Upper lobe of right lung (tissue), 1 donor: ENCODE measurements at regions of chr21 and their contacts with region 1.

Region 1: DNA sequence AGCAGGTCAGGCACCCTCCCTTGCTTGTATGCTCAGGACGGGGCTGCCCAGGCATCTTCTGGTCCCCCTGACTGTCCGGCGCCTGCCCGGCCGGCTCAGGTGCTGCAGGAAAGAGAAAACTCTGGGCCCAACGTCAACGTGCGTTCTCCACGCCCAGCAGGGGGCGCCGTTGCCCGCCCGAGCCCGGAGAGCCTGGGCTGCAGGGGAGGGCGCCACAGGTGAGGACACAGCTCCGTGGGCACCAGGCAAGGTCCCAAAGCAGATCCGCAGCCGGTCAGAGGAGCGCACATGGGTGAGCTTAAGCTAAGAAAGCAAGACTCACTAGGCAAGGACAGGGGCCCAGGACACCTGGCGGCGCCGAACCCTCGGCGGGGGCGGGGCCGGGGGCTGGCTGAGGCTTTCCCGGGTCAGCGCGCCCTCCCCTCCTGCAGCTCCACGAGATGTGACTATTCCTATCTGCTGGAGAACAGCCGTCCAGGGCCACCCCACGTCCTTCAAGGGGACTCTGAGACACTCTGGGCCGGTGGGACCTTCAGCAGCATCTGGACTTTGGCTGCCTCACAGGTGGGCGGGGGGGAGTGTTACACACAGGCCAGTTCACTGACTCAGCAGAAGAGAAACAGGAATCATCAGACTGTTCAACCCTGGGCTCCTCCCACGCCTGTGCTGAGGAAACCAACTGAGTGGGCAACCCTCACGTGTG is 29.3 kb downstream of the KRTAP10-1 start:
- DNase-seq: peak; percentile 87
- ATAC-seq: peak; percentile 76
- H3K4me3 ChIP-seq: no peak overlapping the region
- H3K27ac ChIP-seq: no peak overlapping the region
- H3K4me1 ChIP-seq: no peaks in the 10 kb centered on the region
- H3K27me3 ChIP-seq: peaks cover 18% of the 10 kb centered on the region
- CTCF ChIP-seq: peak; percentile 74

Region 2: DNA sequence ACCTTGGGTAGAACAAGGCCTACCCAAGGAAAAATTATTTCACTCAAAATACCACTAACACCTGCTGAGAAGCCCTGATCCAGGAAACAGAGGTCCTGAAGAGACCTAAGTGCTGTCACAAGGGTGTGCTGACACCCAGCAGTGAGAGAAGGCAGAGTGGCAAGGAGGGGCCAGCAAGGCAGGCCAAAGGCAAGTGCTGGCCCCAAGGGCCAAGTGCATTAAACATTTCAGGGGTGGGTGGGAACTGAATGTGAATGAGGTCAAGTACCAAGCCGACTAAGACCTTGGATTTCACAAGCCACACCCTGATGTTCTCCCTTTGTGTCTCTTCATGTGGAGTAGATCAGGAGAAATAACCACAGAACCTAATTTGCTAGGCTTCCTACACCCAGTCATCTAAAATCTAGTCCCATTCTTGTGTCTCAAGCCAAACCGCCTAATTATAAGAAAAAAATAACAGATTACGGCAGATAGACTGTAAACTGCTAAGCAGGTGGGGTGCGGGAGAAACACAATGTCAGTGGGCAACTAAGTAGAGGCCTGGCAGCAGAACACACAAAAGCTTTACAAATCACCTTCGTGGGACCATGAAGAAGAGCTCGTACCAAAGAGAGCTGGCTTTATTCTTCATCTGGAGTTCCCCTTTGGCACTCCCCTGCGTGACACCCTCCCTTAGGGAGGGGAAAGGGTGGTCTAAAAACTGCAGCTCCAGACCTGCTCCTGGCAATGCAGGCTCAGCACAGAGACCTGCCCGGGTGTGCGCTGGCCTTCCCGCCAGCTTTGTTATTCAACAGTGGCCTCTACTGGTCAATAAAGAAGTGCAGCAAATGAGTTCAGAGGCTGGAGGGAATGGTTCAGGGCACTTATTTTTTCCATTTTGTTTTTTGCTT is 282.3 kb after region 1 on chr21:
- intact Hi-C with region 1: loop called (anchors 2 kb)
- DNase-seq: no peak
- ATAC-seq: peak; percentile 96
- H3K4me3 ChIP-seq: no peak overlapping the region
- H3K27ac ChIP-seq: no peak overlapping the region
- H3K4me1 ChIP-seq: peaks cover 8% of the 10 kb centered on the region
- H3K27me3 ChIP-seq: no peaks in the 10 kb centered on the region
- CTCF ChIP-seq: peak; percentile 85